Endothelial cell of umbilical vein (primary cell): ENCODE measurements at regions of chr20 and their contacts with region 1.

Region 1: DNA sequence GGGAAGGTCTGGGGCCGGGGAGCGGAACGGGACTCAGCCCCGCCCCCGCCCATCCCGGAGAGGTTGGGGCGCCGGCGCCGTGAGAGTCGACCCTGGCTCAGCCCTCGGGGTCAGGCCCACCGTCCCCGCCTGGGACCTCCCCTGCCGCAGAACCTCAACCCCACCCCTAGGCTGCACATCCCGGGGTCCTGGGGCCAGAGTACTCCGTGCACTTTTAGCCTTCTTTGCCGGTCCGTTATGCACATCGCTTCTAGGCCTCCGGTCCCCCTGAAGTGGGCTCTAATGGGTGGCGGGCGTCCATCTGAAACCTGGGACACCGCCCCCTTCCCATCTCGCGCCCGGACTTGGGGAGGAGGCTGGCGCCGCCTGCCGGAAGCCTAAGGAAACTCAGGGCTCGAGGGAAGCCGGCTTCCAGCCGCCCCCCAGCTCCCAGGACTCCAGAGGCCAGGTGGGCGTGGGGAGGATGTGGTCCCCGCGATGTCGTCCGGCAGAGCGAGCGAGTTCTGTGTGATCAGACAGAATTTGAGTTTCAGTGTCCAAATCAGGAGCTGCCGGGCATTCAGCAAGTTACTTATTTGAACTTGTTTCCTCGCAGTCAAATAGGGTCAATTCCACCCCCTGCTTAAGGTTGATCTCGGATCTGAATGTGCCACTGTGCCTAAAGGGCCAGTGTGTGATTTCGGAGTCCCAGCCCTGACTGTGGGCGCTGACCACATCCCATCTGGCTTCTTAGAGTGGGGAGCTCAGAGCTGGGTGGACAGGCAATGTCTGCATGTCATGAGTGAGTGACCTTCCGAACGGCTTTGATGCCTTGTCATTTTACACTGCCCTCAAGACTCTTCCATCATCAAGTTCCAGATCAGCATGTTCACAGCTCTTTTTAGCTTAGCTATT is 47.6 kb downstream of the CPXM1 start:
- DNase-seq: peak; percentile 42
- H3K4me3 ChIP-seq: peak overlapping the region in 1 of 3 experiments; percentile 24
- H3K27ac ChIP-seq: no peak overlapping the region
- H3K4me1 ChIP-seq: peaks cover 17% of the 10 kb centered on the region
- H3K27me3 ChIP-seq: peaks cover 51 to 61% of the 10 kb centered on the region in 2 experiments
- CTCF ChIP-seq: peak; percentile 73 to 87
- POLR2A ChIP-seq: no peak

Region 2: GRCh38 chr20:2210646-2211552 is 541.9 kb before region 1 on chr20:
- CTCF ChIA-PET with region 1: no interaction called
- POLR2A ChIA-PET with region 1: no interaction called
- dilution Hi-C with region 1: no loop called
- intact Hi-C with region 1: no loop called
- DNase-seq: peak; percentile 52
- H3K4me3 ChIP-seq: no peak overlapping the region
- H3K27ac ChIP-seq: no peak overlapping the region
- H3K4me1 ChIP-seq: peaks cover 5% of the 10 kb centered on the region
- H3K27me3 ChIP-seq: peaks cover 4 to 5% of the 10 kb centered on the region in 2 experiments
- CTCF ChIP-seq: no peak
- POLR2A ChIP-seq: no peak

Region 3: DNA sequence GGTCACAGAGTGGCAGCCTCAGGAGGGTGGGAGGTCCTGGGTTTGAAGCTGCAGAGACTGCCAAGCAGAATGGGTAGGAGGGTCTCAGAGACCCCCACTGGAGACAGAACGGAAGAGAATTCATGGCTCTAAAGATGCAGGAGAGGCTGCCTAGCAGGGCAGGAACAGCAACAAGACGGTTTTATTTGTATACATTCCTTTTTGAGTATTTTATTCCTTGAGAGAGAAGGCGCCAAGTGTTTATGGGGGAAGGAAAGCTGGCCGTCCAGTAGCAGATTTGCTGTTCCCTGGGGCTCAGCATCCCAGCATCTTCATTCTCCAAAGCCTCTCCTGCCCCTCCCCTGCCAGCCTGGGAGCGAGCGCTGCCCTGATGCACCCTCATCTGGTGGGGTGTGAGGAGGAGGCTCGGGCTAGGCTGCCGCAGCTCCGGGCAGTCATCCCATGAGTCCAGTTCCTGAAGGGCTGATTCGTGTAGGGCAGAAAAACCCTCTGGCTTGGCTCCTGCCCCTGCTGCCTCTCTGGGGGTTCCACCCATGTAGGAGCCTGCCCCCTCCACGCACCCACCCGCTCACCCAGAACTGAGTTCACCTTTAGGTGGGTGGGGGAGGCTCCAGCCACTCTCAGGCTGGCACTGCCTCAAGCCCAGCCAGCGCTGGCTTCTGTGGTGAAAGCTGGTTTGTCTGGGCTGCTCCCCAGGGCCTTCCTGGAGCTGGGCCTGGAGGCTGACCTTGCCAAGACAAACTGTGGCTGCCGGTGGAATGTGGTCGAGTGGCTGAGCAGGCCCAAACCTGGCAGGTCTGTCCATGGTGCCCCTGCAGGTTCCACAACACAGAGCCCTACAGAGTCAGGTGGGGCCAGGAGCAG is 15.2 kb after region 1 on chr20:
- CTCF ChIA-PET with region 1: interaction called, 21 read pairs
- POLR2A ChIA-PET with region 1: no interaction called
- dilution Hi-C with region 1: no loop called
- intact Hi-C with region 1: no loop called
- DNase-seq: peak; percentile 54
- H3K4me3 ChIP-seq: no peak overlapping the region
- H3K27ac ChIP-seq: no peak overlapping the region
- H3K4me1 ChIP-seq: peaks cover 11% of the 10 kb centered on the region
- H3K27me3 ChIP-seq: peaks cover 0 to 1% of the 10 kb centered on the region in 2 experiments
- CTCF ChIP-seq: no peak
- POLR2A ChIP-seq: no peak

Region 4: GRCh38 chr20:2814076-2814475 is 61.3 kb after region 1 on chr20:
- CTCF ChIA-PET with region 1: no interaction called
- POLR2A ChIA-PET with region 1: no interaction called
- dilution Hi-C with region 1: no loop called
- intact Hi-C with region 1: no loop called
- DNase-seq: no peak
- H3K4me3 ChIP-seq: no peak overlapping the region
- H3K27ac ChIP-seq: no peak overlapping the region
- H3K4me1 ChIP-seq: no peaks in the 10 kb centered on the region
- H3K27me3 ChIP-seq: peaks cover 4 to 9% of the 10 kb centered on the region in 2 experiments
- CTCF ChIP-seq: no peak
- POLR2A ChIP-seq: no peak

Region 5: DNA sequence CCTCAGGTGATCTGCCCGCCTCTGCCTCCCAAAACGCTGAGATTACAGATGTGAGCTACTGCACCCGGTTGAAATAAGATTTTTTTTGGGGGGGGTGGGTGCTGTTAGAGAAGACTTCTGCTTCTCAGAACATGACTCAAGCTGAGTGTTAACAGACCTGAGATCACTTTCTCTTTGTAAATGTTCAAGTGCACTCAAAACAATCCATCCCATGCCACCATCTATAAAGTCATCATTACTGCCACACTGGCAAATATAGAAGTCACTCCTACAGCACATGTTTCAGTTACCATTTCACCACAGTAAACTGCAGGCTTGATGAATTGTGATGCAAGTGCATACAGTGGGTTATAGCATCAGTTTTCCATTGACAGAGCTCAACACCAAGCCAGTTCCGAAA is 96.7 kb after region 1 on chr20:
- CTCF ChIA-PET with region 1: interaction called, 171 read pairs
- POLR2A ChIA-PET with region 1: no interaction called
- dilution Hi-C with region 1: no loop called
- intact Hi-C with region 1: loop called (anchors 1 kb)
- DNase-seq: no peak
- H3K4me3 ChIP-seq: no peak overlapping the region
- H3K27ac ChIP-seq: no peak overlapping the region
- H3K4me1 ChIP-seq: no peaks in the 10 kb centered on the region
- H3K27me3 ChIP-seq: no peaks in the 10 kb centered on the region
- CTCF ChIP-seq: no peak
- POLR2A ChIP-seq: no peak

Region 6: DNA sequence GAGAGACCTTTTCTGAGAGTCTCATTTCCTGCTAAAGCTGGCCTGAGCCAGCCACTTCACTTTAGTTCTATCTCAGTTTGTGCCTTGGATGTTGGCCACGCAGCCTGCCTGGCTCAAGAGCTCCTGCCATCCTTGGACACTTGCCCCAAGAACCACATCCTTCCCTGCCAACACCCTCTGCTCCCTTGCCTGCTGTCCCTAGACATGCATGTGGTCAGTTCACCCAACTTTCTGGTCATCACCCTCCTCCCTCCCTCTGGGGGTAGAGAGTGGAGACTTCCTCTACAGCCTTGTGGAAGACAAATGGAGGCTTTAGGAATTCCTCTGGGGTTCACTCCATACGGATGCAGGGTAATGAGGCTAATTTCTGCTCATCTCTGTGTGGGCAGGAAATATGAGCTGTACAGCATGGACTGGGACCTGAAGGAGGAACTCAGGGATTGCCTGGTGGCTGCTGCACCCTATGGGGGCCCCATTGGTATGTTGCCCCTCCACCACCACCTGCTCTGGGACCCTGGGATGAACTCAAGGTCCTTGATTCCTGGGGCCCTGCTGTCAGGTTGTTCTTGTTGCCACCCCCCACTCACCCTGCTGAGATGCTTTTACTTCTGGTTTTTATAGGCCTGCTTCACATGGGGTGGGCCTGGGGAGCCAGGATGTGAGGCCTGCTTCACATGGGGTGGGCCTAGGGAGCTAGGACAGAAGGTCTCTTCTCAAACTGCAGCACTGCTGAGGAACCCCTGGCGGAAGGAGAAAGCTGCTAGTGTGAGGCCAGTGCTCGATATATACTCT is 106.7 kb after region 1 on chr20:
- CTCF ChIA-PET with region 1: interaction called, 20 read pairs
- POLR2A ChIA-PET with region 1: no interaction called
- dilution Hi-C with region 1: no loop called
- intact Hi-C with region 1: no loop called
- DNase-seq: no peak
- H3K4me3 ChIP-seq: no peak overlapping the region
- H3K27ac ChIP-seq: no peak overlapping the region
- H3K4me1 ChIP-seq: no peaks in the 10 kb centered on the region
- H3K27me3 ChIP-seq: no peaks in the 10 kb centered on the region
- CTCF ChIP-seq: no peak
- POLR2A ChIP-seq: no peak

Region 7: GRCh38 chr20:3000852-3001523 is 248.2 kb after region 1 on chr20:
- CTCF ChIA-PET with region 1: interaction called, 22 read pairs
- POLR2A ChIA-PET with region 1: no interaction called
- dilution Hi-C with region 1: no loop called
- intact Hi-C with region 1: loop called (anchors 1 kb)
- DNase-seq: peak; percentile 80
- H3K4me3 ChIP-seq: no peak overlapping the region
- H3K27ac ChIP-seq: no peak overlapping the region
- H3K4me1 ChIP-seq: no peaks in the 10 kb centered on the region
- H3K27me3 ChIP-seq: no peaks in the 10 kb centered on the region
- CTCF ChIP-seq: peak; percentile 15 to 43
- POLR2A ChIP-seq: no peak